ENCODE measurements at regions of chr1 and their contacts with region 1.

Region 1: DNA sequence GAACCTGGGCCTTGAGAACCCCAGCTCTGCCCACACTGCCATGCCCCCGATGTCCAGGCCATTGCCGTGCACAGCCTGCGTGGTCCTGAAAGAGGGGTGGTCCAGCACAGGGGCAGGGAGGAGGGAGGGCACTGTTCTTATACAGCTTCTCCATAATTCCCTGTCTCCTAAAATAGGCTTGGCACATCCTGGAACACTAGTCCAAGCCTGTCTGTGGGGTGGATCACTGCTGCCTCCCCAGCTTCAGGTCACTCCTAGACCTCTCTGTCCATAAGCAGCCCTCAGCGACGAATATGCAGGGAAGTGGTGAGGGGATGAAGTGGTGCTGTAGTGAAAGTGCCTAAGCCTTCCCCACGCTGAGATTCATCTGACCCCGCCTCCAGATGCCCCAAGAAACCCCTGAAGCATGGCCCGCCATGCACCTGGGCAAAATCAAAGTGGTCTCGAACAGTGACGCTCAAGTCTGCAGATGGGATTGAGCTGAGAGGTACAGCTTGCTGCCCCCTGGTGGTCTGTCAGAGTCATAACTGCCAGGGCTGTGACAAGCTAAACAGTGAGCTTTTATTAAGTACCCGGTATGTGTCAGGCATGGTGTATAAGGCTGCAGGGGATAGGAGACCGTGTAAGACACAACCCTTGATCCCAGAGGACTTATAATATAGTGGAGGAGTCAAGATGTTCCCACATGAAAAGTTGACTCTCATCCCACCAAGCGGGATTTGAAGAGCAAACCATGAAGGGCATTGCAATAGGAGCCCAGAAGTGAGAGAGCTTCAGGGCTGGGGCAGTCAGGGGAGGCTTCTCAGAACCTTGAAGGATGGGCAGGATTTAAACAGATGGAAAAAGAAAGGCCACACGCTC is 66.6 kb downstream of the FAM163A start:
- DNase-seq: peak; percentile 82
- H3K4me3 Mint-ChIP-seq: no peak overlapping the region
- H3K27ac Mint-ChIP-seq: no peak overlapping the region
- H3K4me1 Mint-ChIP-seq: peaks cover 16% of the 10 kb centered on the region
- H3K27me3 Mint-ChIP-seq: peaks cover 42% of the 10 kb centered on the region
- CTCF ChIP-seq: peak; percentile 91

Region 2: DNA sequence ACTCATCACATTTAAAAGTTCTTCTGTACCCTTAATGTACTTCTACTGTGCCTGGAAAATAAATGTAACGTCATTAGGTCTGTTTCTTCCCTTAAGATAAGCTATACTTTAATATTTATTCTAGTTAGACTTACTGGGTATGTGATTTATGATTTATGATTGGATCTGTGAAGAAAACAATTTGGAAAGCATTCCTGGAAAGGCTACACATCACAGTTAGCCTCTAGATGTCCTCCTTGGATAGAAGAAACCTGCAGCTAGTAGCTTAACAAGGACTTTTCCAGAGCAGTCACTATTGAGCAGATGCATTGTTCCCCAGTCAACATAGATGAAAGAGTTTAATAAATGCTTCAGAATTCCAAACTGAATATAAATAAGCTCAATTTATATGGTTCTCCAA is 558.1 kb before region 1 on chr1:
- CTCF ChIA-PET with region 1: interaction called, 31 read pairs
- POLR2A ChIA-PET with region 1: no interaction called
- intact Hi-C with region 1: loop called (anchors 2 kb)
- DNase-seq: peak; percentile 56
- H3K4me3 Mint-ChIP-seq: no peak overlapping the region
- H3K27ac Mint-ChIP-seq: no peak overlapping the region
- H3K4me1 Mint-ChIP-seq: no peaks in the 10 kb centered on the region
- H3K27me3 Mint-ChIP-seq: no peaks in the 10 kb centered on the region
- CTCF ChIP-seq: peak; percentile 73

Region 3: GRCh38 chr1:179754042-179754624 is 55.6 kb before region 1 on chr1:
- CTCF ChIA-PET with region 1: interaction called, 21 read pairs
- POLR2A ChIA-PET with region 1: no interaction called
- intact Hi-C with region 1: no loop called
- DNase-seq: peak; percentile 69
- H3K4me3 Mint-ChIP-seq: no peak overlapping the region
- H3K27ac Mint-ChIP-seq: no peak overlapping the region
- H3K4me1 Mint-ChIP-seq: no peaks in the 10 kb centered on the region
- H3K27me3 Mint-ChIP-seq: peaks cover 16% of the 10 kb centered on the region
- CTCF ChIP-seq: no peak

Region 4: GRCh38 chr1:179776831-179777230 is 32.9 kb before region 1 on chr1:
- CTCF ChIA-PET with region 1: interaction called, 59 read pairs
- POLR2A ChIA-PET with region 1: interaction called, 3 read pairs
- intact Hi-C with region 1: no loop called
- DNase-seq: no peak
- H3K4me3 Mint-ChIP-seq: no peak overlapping the region
- H3K27ac Mint-ChIP-seq: no peak overlapping the region
- H3K4me1 Mint-ChIP-seq: no peaks in the 10 kb centered on the region
- H3K27me3 Mint-ChIP-seq: no peaks in the 10 kb centered on the region
- CTCF ChIP-seq: no peak

Region 5: DNA sequence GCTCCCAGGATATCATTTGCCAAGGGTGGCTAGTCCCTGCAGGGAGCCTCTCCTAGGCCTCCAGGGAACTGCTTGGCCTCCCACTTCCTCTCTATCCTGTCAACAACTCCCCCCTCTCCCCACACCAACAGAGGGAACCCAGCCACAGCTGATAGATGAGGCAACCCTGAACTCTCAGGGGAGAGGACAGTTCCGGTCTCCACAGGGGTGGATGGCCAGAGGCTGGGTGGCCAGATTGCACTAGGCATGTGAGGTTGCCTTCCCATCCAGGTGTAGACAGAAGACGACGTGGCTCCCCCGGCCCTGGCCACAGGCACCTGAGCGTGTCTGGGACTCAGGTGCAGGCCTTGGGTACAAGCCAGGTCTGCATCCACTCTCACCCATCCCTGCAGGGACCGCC is 14.5 kb after region 1 on chr1:
- CTCF ChIA-PET with region 1: interaction called, 103 read pairs
- POLR2A ChIA-PET with region 1: no interaction called
- intact Hi-C with region 1: no loop called
- DNase-seq: no peak
- H3K4me3 Mint-ChIP-seq: no peak overlapping the region
- H3K27ac Mint-ChIP-seq: no peak overlapping the region
- H3K4me1 Mint-ChIP-seq: no peaks in the 10 kb centered on the region
- H3K27me3 Mint-ChIP-seq: no peaks in the 10 kb centered on the region
- CTCF ChIP-seq: no peak

Region 6: DNA sequence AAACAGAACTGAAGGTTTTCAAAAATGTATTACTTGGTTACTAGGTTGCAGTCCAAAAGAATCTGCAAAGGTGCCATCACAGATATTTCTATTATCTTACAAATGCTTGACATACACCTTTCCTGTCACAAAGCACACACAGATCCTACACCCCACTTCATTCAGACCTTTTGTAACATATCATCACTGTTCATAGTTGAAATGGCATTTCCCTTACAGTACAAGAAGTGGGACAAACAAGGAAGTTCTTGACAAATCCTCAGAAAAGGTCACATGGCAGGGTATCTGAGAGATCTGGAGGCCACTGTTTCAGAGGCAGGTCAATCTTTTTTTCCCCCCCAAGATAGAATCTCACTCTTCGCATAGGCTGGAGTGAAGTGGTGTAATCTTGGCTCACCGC is 46.6 kb after region 1 on chr1:
- CTCF ChIA-PET with region 1: interaction called, 16 read pairs
- POLR2A ChIA-PET with region 1: no interaction called
- intact Hi-C with region 1: no loop called
- DNase-seq: no peak
- H3K4me3 Mint-ChIP-seq: no peak overlapping the region
- H3K27ac Mint-ChIP-seq: no peak overlapping the region
- H3K4me1 Mint-ChIP-seq: peaks cover 14% of the 10 kb centered on the region
- H3K27me3 Mint-ChIP-seq: no peaks in the 10 kb centered on the region
- CTCF ChIP-seq: no peak

Region 7: GRCh38 chr1:180020017-180020416 is 210.3 kb after region 1 on chr1:
- CTCF ChIA-PET with region 1: no interaction called
- POLR2A ChIA-PET with region 1: no interaction called
- intact Hi-C with region 1: no loop called
- DNase-seq: no peak
- H3K4me3 Mint-ChIP-seq: no peak overlapping the region
- H3K27ac Mint-ChIP-seq: no peak overlapping the region
- H3K4me1 Mint-ChIP-seq: no peaks in the 10 kb centered on the region
- H3K27me3 Mint-ChIP-seq: no peaks in the 10 kb centered on the region
- CTCF ChIP-seq: no peak

Region 8: DNA sequence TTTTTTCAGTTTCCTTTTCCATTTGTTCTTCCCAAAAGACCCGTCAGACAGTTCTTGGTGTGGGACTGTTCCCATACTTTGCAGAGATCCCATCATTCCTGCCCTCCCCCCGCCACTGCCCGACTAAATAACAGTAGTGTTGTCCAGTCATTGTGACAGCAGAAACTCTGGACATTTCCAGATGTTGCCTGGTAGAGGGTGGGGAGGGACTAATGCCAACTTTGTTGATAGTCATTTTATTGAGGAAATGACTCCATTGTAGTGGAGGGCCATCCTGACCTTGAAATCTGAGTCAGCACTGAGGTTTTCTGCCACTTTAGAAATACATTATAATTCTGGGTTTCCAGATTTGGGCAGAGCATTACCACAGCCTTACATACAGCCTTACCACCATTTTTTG is 230.3 kb after region 1 on chr1:
- CTCF ChIA-PET with region 1: no interaction called
- POLR2A ChIA-PET with region 1: no interaction called
- intact Hi-C with region 1: no loop called
- DNase-seq: peak; percentile 81
- H3K4me3 Mint-ChIP-seq: no peak overlapping the region
- H3K27ac Mint-ChIP-seq: no peak overlapping the region
- H3K4me1 Mint-ChIP-seq: peaks cover 15% of the 10 kb centered on the region
- H3K27me3 Mint-ChIP-seq: no peaks in the 10 kb centered on the region
- CTCF ChIP-seq: no peak